ENCODE measurements at regions of chr5 and their contacts with region 1.

Region 1: GRCh38 chr5:172697123-172698121 is 56.4 kb downstream of the NEURL1B start:
- DNase-seq: peak; percentile 74 to 93
- ATAC-seq: peak; percentile 93 to 98 (median 97)
- H3K4me3 ChIP-seq: peak overlapping the region; percentile 67
- H3K4me3 Mint-ChIP-seq: peak overlapping the region; percentile 98
- H3K27ac ChIP-seq: peak overlapping the region; percentile 57
- H3K27ac Mint-ChIP-seq: peak overlapping the region; percentile 85 to 94
- H3K4me1 ChIP-seq: peaks cover 26% of the 10 kb centered on the region
- H3K4me1 Mint-ChIP-seq: peaks cover 21 to 28% of the 10 kb centered on the region in 2 donors
- H3K27me3 ChIP-seq: peaks cover 2% of the 10 kb centered on the region
- H3K27me3 Mint-ChIP-seq: peaks cover 19 to 25% of the 10 kb centered on the region in 2 donors
- CTCF ChIP-seq: peak; percentile 81

Region 2: GRCh38 chr5:172437445-172438308 is 259.7 kb before region 1 on chr5:
- intact Hi-C with region 1: no loop called
- DNase-seq: no peak
- ATAC-seq: no peak
- H3K4me3 ChIP-seq: no peak overlapping the region
- H3K4me3 Mint-ChIP-seq: no peak overlapping the region
- H3K27ac ChIP-seq: no peak overlapping the region
- H3K27ac Mint-ChIP-seq: no peak overlapping the region
- H3K4me1 ChIP-seq: no peaks in the 10 kb centered on the region
- H3K4me1 Mint-ChIP-seq: no peaks in the 10 kb centered on the region
- H3K27me3 ChIP-seq: peaks cover 2% of the 10 kb centered on the region
- H3K27me3 Mint-ChIP-seq: peaks cover 0 to 5% of the 10 kb centered on the region in 2 donors
- CTCF ChIP-seq: no peak

Region 3: DNA sequence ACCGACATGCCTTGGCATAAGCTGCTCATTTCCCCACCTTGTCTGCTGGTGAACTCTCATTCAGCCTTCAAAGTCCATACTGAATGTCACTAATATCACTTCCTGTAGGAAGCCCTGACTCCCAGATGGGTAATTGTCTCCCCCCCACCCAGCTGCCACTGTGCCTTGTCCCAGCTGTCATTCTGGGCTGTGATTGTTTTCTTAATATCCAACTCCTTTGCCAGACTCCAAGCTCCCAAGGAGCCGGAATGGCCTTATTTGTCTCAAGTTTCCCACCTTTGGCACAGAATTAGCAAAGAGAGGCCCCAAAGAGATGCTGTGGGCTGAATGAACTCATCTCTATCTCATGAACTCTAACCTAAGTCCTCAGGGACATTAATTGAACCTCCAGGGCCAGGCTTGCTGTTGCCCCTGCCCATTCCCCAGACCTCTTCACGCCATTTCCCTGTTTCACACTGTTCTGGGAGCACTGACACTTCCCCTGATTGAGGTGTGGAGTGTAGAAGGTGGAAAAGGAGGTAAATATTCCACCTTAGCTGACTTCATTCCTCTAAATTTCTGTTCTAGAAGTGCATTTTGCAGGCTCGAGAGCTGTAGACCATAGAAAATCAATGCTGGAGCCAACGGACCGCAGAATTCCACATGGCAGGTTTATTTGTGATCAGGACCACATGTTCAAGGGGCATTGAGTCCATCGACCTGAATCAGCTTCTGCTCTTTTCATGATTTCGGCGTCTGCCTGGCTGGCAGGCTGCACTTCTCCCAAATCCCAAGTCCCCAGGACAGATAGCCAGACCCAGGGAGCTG is 238.2 kb before region 1 on chr5:
- intact Hi-C with region 1: loop called (anchors 1 kb)
- DNase-seq: no peak
- ATAC-seq: no peak
- H3K4me3 ChIP-seq: no peak overlapping the region
- H3K4me3 Mint-ChIP-seq: no peak overlapping the region
- H3K27ac ChIP-seq: no peak overlapping the region
- H3K27ac Mint-ChIP-seq: no peak overlapping the region
- H3K4me1 ChIP-seq: peaks cover 5% of the 10 kb centered on the region
- H3K4me1 Mint-ChIP-seq: peaks cover 6% of the 10 kb centered on the region in 2 donors
- H3K27me3 ChIP-seq: no peaks in the 10 kb centered on the region
- H3K27me3 Mint-ChIP-seq: peaks cover 9 to 17% of the 10 kb centered on the region in 2 donors
- CTCF ChIP-seq: no peak

Region 4: GRCh38 chr5:172479044-172479783 is 218.2 kb before region 1 on chr5:
- intact Hi-C with region 1: loop called (anchors 1 kb)
- DNase-seq: peak; percentile 27 to 78
- ATAC-seq: peak; percentile 67 to 94 (median 78)
- H3K4me3 ChIP-seq: no peak overlapping the region
- H3K4me3 Mint-ChIP-seq: no peak overlapping the region
- H3K27ac ChIP-seq: no peak overlapping the region
- H3K27ac Mint-ChIP-seq: no peak overlapping the region
- H3K4me1 ChIP-seq: no peaks in the 10 kb centered on the region
- H3K4me1 Mint-ChIP-seq: no peaks in the 10 kb centered on the region
- H3K27me3 ChIP-seq: no peaks in the 10 kb centered on the region
- H3K27me3 Mint-ChIP-seq: peaks cover 0 to 9% of the 10 kb centered on the region in 2 donors
- CTCF ChIP-seq: peak; percentile 27

Measured in natural killer cell (primary cell).